MCF 10A (cell line): ENCODE measurements at regions of chr2 and their contacts with region 1.

Region 1: GRCh38 chr2:111071600-111072171 is 49.0 kb upstream of the BCL2L11 start:
- DNase-seq: peak; percentile 76
- H3K4me3 Mint-ChIP-seq: peak overlapping the region; percentile 19
- H3K27ac Mint-ChIP-seq: peak overlapping the region; percentile 81
- H3K4me1 Mint-ChIP-seq: peaks cover 27% of the 10 kb centered on the region
- H3K27me3 Mint-ChIP-seq: peaks cover 6% of the 10 kb centered on the region
- CTCF ChIP-seq: no peak

Region 2: GRCh38 chr2:109558076-109558882 is 1513.4 kb before region 1 on chr2:
- CTCF ChIA-PET with region 1: no interaction called
- POLR2A ChIA-PET with region 1: no interaction called
- intact Hi-C with region 1: no loop called
- DNase-seq: peak; percentile 82
- H3K4me3 Mint-ChIP-seq: no peak overlapping the region
- H3K27ac Mint-ChIP-seq: peak overlapping the region; percentile 21
- H3K4me1 Mint-ChIP-seq: peaks cover 6% of the 10 kb centered on the region
- H3K27me3 Mint-ChIP-seq: no peaks in the 10 kb centered on the region
- CTCF ChIP-seq: no peak

Region 3: DNA sequence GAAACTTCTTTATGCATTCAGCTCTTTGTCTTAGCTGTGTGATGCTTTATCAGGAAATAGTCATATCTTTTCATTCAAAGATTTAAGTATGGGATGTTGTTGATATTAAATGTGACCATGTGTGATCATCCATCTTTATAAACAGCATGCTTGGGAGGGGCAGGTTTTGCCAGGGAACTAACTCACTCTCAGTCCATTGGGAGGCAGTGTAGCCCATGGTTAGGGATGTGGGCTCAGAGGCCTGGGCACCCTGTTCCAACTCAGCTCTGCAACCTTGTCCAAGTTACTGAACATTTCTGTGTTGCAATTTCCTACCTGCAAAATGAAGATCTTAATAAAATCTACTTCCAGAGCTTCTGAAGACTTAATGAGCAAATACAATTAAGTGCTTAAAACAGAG is 43.0 kb before region 1 on chr2:
- CTCF ChIA-PET with region 1: interaction called, 3 read pairs
- POLR2A ChIA-PET with region 1: no interaction called
- intact Hi-C with region 1: loop called (anchors 10 kb)
- DNase-seq: peak; percentile 53
- H3K4me3 Mint-ChIP-seq: no peak overlapping the region
- H3K27ac Mint-ChIP-seq: no peak overlapping the region
- H3K4me1 Mint-ChIP-seq: peaks cover 27% of the 10 kb centered on the region
- H3K27me3 Mint-ChIP-seq: peaks cover 26% of the 10 kb centered on the region
- CTCF ChIP-seq: peak; percentile 30